GM10248 (cell line): ENCODE measurements at regions of chr7 and their contacts with region 1.

Region 1: GRCh38 chr7:50632561-50633413 is 67.6 kb upstream of the DDC start:
- DNase-seq: peak; percentile 60
- CTCF ChIP-seq: peak; percentile 89

Region 2: DNA sequence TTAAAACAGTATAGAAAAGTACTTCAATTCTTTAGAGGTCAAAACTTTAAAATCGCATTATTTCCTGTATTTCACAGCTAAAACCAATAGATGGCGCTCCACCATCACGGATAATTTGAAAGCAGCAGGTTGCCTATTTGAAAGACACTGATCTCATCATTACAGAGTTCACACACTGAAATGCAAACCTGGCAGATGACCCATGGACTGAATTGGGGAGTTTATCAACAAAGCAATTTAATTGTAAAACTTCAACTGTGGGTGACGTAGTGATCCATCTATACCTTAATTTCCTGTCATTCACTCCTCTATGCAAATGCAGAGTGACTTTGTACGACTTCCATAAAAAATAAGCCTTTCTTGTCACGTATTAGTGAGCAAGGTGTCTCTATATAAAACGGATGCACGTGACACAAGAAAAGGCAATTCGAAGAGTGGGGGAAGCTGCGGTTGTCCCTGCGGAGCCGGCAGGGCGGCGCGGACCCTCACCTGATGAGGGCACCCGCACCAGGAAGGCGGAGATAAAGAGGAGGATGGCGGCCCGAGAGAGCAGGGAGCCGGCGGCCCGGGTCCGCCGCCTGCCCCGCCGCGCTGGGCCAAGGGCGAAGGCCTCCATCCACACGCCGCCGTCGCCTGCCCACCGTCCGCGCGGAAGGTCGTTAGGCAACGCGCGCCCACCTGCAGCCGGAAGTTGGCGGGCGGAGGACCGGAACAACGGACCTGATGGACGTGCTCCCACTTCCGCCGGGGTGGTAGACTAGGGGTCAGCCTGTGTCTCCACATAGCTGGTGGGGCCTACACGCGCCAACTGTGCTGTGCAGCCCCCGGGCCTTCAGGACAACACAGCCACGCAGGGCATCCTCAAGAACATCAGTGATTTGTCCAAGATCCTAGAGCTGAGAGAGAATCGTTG is 540.0 kb before region 1 on chr7 and contains the start of gene ZPBP:
- CTCF ChIA-PET with region 1: interaction called, 23 read pairs
- POLR2A ChIA-PET with region 1: no interaction called
- DNase-seq: peak; percentile 54
- CTCF ChIP-seq: peak; percentile 74

Region 3: GRCh38 chr7:50467817-50468610 is 164.8 kb before region 1 on chr7:
- CTCF ChIA-PET with region 1: interaction called, 19 read pairs
- POLR2A ChIA-PET with region 1: no interaction called
- DNase-seq: peak; percentile 83
- CTCF ChIP-seq: peak; percentile 82

Region 4: DNA sequence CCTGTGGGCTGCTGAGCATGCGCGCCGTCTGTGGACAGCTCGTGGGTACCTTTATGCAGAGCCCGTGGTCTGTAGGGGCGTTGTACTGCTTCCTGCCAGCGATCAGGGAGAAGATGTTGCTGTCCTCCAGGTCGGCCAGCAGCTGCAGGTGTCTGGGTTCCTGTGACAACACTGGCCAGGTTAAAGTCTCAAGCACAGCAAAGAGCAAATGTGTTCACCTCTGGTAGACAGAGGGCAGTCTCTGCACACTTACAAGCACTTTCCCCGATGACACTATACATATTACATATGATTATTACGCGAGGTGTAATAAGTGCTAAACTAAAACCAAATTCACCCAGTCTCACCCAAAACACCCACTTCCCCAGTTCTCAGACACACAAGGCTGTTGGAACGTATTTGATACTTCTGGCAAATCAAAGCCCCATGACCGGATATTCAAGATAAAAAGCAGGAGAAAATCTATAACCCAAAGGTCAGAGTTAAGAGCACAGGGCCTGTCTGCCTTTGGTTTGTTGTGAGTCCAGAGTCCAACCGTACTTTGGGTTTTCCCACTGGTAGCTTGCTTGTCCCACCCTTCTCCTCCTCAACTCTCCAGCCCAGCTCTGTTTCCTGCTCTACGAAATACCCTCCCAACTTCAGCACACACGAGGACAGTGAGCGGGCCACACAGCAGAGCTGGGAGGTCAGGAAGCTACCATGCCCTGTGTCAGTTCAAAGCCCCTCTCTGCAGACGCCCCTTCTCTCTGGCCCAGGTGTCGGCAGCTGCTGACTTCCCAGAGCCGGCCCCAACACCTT is 17.9 kb before region 1 on chr7:
- CTCF ChIA-PET with region 1: interaction called, 22 read pairs
- POLR2A ChIA-PET with region 1: no interaction called
- DNase-seq: no peak
- CTCF ChIP-seq: peak; percentile 3